Activated T-helper 1 cell treated with anti-CD3 and anti-CD28 coated beads, Interleukin-12 subunit alpha, Interleukin-12 subunit beta, Interleukin-2, Interleukin-4 antibody, amounts not matched to agents 30 ng/mL and 10 ng/mL and 1 ng/mL, durations not matched to agents 14 hours and 24 hours and 36 hours (primary cell): ENCODE measurements at regions of chr3 and their contacts with region 1.

Region 1: GRCh38 chr3:49411968-49412631 is at the starts of genes RHOA and TCTA:
- DNase-seq: peak; percentile 99
- H3K4me3 Mint-ChIP-seq: peak within 1 kb of the TSS; percentile 98
- H3K27ac Mint-ChIP-seq: peak within 1 kb of the TSS; percentile 96
- H3K4me1 Mint-ChIP-seq: peaks cover 71% of the 10 kb centered on the region
- H3K27me3 Mint-ChIP-seq: no peaks in the 10 kb centered on the region
- total RNA-seq, gene RHOA: 376 and 381 TPM in 2 replicates
- total RNA-seq, gene TCTA: 27.8 and 30.0 TPM in 2 replicates

Region 2: GRCh38 chr3:49120438-49121131 is 291.5 kb before region 1 on chr3 and contains the start of gene USP19:
- intact Hi-C with region 1: loop called (anchors 2 kb)
- DNase-seq: peak; percentile 94
- H3K4me3 Mint-ChIP-seq: peak within 1 kb of the TSS; percentile 90
- H3K27ac Mint-ChIP-seq: peak within 1 kb of the TSS; percentile 88
- H3K4me1 Mint-ChIP-seq: peaks cover 10% of the 10 kb centered on the region
- H3K27me3 Mint-ChIP-seq: peaks cover 1% of the 10 kb centered on the region
- total RNA-seq, gene USP19: 57.7 and 59.7 TPM in 2 replicates

Region 3: DNA sequence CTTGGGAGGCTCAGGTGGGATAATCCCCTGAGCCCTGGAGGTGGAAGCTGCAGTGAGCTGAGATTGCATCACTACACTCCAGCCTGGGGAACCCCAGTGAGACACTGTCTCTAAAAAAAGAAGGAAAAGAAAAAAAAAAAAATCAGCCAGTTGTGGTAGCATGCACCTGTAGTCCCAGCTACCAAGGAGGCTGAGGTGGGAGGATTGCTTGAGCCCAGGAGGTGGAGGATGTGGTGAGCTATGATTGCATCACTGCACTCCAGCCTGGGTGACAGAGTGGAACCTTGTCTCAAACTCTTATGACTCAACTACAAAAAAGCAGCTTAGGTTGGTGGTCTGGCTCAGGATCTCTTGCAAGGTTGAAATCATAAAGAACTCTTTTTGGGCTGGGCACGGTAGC is 34.6 kb before region 1 on chr3:
- intact Hi-C with region 1: loop called (anchors 1 kb)
- DNase-seq: peak; percentile 49
- H3K4me3 Mint-ChIP-seq: peak overlapping the region; percentile 19
- H3K27ac Mint-ChIP-seq: peak overlapping the region; percentile 82
- H3K4me1 Mint-ChIP-seq: peaks cover 16% of the 10 kb centered on the region
- H3K27me3 Mint-ChIP-seq: no peaks in the 10 kb centered on the region

Region 4: GRCh38 chr3:49445381-49445780 is 33.3 kb after region 1 on chr3:
- intact Hi-C with region 1: loop called (anchors 1 kb)
- DNase-seq: no peak
- H3K4me3 Mint-ChIP-seq: no peak overlapping the region
- H3K27ac Mint-ChIP-seq: no peak overlapping the region
- H3K4me1 Mint-ChIP-seq: peaks cover 12% of the 10 kb centered on the region
- H3K27me3 Mint-ChIP-seq: no peaks in the 10 kb centered on the region

Region 5: DNA sequence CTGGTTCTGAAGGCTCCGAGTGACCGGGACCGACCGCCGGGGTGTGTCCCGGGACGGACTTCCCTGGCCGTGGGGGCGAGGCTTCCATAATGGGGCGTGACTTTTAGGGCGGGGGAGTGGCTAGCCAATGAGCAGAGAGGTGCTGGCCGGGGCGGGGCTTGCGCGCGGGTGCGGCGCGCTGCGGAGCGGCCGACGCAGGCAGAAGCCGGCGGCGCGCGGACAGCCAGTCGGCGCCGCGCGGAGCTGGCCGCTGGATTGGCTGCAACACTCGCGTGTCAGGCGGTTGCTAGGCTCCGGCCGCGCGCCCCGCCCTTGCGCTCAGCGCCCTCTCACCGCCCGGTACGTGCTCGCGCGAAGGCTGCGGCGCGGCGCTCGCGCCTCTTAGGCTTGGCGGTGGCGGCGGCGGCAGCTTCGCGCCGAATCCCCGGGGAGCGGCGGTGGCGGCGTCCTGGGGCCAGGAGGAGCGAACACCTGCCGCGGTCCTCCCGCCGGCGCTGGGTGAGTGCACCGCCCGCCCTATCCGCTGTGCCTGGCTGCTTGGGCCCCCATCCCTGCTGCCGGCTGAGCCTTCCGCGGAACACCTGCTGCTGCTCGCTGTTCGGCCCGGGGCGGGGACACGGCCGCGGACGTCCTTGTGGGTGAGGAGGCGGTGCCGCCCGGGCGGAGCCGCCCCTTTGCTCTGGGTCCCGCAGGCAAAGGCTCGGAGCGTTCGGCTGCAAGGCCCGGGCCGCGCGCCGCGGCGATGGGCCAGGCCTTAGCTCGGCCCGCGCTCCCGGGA is 58.0 kb after region 1 on chr3 and contains the start of gene DAG1:
- intact Hi-C with region 1: loop called (anchors 1 kb)
- DNase-seq: peak; percentile 96
- H3K4me3 Mint-ChIP-seq: peak within 1 kb of the TSS; percentile 92
- H3K27ac Mint-ChIP-seq: peak within 1 kb of the TSS; percentile 88
- H3K4me1 Mint-ChIP-seq: peaks cover 23% of the 10 kb centered on the region
- H3K27me3 Mint-ChIP-seq: no peaks in the 10 kb centered on the region
- total RNA-seq, gene DAG1: 20.5 and 23.7 TPM in 2 replicates

Region 6: GRCh38 chr3:49966230-49966942 is 554.3 kb after region 1 on chr3:
- intact Hi-C with region 1: no loop called
- DNase-seq: no peak
- H3K4me3 Mint-ChIP-seq: no peak overlapping the region
- H3K27ac Mint-ChIP-seq: no peak overlapping the region
- H3K4me1 Mint-ChIP-seq: no peaks in the 10 kb centered on the region
- H3K27me3 Mint-ChIP-seq: no peaks in the 10 kb centered on the region